Aorta (tissue), 5 donors: ENCODE measurements at regions of chr15 and their contacts with region 1.

Region 1: GRCh38 chr15:63157118-63157843 is at the start of gene RPS27L:
- DNase-seq: peak; percentile 95 to 96
- ATAC-seq: peak; percentile 97
- H3K4me3 ChIP-seq: peak within 1 kb of the TSS; percentile 42 to 55
- H3K27ac ChIP-seq: peak within 1 kb of the TSS; percentile 3 to 70
- H3K4me1 ChIP-seq: no peaks in the 10 kb centered on the region
- H3K27me3 ChIP-seq: peaks cover 0 to 1% of the 10 kb centered on the region in 2 donors
- total RNA-seq, gene RPS27L: 150 to 179 TPM

Region 2: GRCh38 chr15:63048115-63048775 is 109.0 kb before region 1 on chr15:
- intact Hi-C with region 1: loop called in 1 of 2 experiments (anchors 10 kb)
- DNase-seq: peak; percentile 94 to 96
- ATAC-seq: peak; percentile 90
- H3K4me3 ChIP-seq: peak overlapping the region; percentile 95 to 98
- H3K27ac ChIP-seq: peak overlapping the region; percentile 17 to 65
- H3K4me1 ChIP-seq: peaks cover 0 to 6% of the 10 kb centered on the region in 2 donors
- H3K27me3 ChIP-seq: no peaks in the 10 kb centered on the region

Region 3: DNA sequence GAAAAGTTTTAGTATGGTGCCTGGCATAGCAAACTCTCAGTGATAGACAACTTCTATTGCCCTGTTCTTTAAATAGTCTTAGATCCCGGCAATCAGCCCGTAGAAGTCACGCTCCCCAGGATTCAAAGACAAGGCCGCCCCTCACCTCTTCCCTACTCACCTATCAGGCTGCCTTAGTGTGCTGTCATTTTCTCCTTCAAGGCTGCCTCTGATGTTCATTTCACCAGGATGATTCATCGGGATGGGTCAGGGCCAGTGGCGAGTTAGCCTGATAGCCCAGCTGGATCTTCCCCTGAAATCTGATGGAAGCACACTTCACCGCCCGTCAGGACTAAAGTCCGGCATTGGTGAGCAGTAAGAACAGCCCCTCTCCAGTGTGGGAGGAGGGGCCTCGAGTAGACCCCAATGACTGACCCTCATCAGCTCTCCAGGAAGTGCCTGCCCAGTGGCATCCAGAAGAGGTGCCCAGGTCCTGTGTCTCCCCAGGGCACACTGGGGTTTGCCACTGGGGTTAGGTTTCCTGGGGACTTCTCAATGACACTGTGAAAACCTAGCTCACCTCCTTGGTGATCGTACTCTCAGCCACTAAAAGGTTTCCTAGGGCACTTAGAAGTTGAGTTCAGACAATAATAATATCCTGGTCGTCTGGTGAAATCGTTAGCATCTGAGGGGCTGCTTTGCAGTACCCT is 77.2 kb before region 1 on chr15:
- intact Hi-C with region 1: no loop called
- DNase-seq: no peak
- ATAC-seq: no peak
- H3K4me3 ChIP-seq: no peak overlapping the region
- H3K27ac ChIP-seq: no peak overlapping the region
- H3K4me1 ChIP-seq: no peaks in the 10 kb centered on the region
- H3K27me3 ChIP-seq: no peaks in the 10 kb centered on the region

Region 4: GRCh38 chr15:63122002-63122893 is 35.0 kb before region 1 on chr15:
- intact Hi-C with region 1: loop called in 1 of 2 experiments (anchors 5 kb)
- DNase-seq: peak; percentile 92 to 93
- ATAC-seq: peak; percentile 98
- H3K4me3 ChIP-seq: peak overlapping the region; percentile 86 to 95
- H3K27ac ChIP-seq: peak overlapping the region; percentile 73 to 74
- H3K4me1 ChIP-seq: no peaks in the 10 kb centered on the region
- H3K27me3 ChIP-seq: no peaks in the 10 kb centered on the region

Region 5: DNA sequence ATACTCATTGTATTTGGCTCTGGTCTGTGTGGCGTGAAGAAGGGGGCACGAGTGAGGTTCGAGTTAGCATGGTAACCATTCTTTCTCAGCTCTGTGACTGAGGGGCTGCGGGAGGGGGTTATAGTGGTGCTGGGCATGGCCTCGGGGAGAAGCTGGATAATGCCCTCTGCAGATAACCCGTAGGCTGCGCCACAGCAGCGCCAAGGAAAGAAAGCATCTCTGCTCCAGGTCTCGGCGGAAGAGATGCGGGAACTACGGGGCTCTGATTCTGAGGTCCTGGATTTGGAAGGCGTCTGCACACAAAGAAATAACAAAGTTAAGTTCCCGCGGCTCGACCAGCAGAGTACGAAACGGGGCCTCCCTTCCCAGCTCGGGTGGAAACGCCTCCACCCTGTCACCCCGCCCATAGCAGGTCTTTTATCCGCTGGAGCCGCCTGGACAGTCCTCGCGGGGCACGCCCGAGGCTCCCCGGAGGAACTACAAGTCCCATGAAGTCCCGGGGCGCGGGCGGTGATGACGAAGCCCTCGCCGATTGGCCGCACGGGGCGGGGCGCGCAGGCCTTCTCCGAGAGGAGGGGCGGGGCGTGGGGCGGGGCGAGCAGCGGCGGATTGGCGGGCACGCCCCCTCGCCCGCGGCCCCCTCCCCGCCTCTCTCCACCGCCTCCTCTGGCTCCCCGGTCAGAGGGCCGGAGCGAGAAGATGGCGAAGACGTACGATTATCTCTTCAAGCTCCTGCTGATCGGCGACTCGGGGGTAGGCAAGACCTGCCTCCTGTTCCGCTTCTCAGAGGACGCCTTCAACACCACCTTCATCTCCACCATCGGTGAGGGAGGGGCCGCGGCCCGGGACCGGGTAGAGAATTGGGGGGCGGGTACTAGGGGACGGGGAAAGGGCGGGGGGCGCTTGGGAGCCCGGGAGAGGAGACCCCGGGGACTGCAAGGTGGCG is 31.9 kb after region 1 on chr15 and contains the start of gene RAB8B:
- intact Hi-C with region 1: loop called in 1 of 2 experiments (anchors 1 kb)
- DNase-seq: peak; percentile 99 to 100
- ATAC-seq: peak; percentile 99
- H3K4me3 ChIP-seq: peak within 1 kb of the TSS; percentile 71 to 88
- H3K27ac ChIP-seq: peak within 1 kb of the TSS in 1 of 2 donors; percentile 43
- H3K4me1 ChIP-seq: no peaks in the 10 kb centered on the region
- H3K27me3 ChIP-seq: no peaks in the 10 kb centered on the region
- total RNA-seq, gene RAB8B: 40.6 to 47.9 TPM